ENCODE measurements at regions of chr11 and their contacts with region 1.

Region 1: GRCh38 chr11:14698771-14699170 is 55.2 kb downstream of the PDE3B start:
- DNase-seq: no peak
- ATAC-seq: no peak
- H3K4me3 ChIP-seq: no peak overlapping the region
- H3K27ac ChIP-seq: no peak overlapping the region
- H3K4me1 ChIP-seq: no peaks in the 10 kb centered on the region
- H3K27me3 ChIP-seq: no peaks in the 10 kb centered on the region
- CTCF ChIP-seq: no peak
- POLR2A ChIP-seq: no peak
- RAD21 ChIP-seq: no peak

Region 2: DNA sequence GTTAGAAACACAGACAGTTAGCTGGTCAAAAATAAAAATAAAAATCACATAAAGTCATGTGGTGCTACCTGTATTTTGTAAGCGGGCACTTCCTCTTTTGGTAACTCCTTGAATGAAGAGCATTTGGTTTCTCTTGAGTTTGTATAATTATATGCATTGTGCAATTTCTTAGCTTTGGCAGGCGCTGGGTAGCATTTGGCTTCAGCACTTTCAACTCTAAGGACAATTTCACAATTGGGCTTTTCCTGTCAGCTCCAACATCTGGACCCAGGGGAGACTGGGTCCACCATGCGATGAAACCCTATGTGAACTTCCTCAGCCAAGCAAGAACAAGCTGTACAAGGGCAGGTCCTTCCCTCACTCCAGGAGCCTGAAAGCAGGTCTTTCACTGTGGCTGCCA is 508.9 kb before region 1 on chr11:
- CTCF ChIA-PET with region 1: no interaction called
- POLR2A ChIA-PET with region 1: no interaction called
- dilution Hi-C with region 1: no loop called
- in situ Hi-C with region 1: no loop called
- intact Hi-C with region 1: loop called (anchors 5 kb)
- DNase-seq: no peak
- ATAC-seq: no peak
- H3K4me3 ChIP-seq: no peak overlapping the region
- H3K27ac ChIP-seq: no peak overlapping the region
- H3K4me1 ChIP-seq: no peaks in the 10 kb centered on the region
- H3K27me3 ChIP-seq: no peaks in the 10 kb centered on the region; the same call in 1 of the 2 replicates
- CTCF ChIP-seq: no peak
- POLR2A ChIP-seq: no peak
- RAD21 ChIP-seq: no peak

Measured in IMR-90 (cell line).